ENCODE measurements at regions of chr11 and their contacts with region 1.

Region 1: DNA sequence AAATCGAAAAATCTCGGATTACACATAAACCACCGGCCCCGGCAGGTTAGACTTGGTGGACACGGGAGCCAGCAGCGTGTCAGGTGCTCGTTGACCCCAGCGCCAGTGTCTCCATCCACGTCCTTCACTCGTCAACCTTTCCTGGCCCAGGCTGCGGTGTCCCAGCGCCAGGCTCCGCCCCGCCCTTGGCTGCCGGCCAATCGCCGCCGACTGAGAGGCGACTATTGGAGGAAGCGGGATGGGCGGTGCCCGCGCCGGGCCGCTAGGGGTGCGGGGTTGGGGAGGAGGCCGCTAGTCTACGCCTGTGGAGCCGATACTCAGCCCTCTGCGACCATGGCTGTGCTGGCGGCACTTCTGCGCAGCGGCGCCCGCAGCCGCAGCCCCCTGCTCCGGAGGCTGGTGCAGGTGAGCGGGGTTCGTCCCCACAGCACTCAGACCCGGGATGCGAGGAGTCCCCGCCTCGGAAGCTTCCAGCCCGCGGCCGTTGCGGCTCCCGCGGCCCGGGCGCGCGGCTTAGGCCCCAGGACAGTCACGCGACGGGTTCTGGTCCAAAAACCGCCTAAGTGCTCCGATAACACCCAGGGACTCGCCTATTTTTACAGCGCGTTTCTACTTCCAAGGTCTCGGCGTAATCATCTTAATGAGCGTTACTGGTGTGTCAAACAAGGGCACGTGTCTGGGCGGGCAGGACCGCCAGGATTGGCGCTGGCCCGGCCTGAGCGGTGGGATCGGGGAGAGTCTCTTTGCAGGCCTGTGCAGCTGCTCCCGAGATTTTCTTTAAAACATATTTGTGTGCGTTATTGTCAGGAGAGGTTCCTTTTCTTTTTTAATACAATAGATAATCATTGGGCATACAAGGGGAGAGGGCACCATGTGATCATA is at the start of gene ACAT1:
- DNase-seq: peak; percentile 93 to 99 (median 96)

Region 2: DNA sequence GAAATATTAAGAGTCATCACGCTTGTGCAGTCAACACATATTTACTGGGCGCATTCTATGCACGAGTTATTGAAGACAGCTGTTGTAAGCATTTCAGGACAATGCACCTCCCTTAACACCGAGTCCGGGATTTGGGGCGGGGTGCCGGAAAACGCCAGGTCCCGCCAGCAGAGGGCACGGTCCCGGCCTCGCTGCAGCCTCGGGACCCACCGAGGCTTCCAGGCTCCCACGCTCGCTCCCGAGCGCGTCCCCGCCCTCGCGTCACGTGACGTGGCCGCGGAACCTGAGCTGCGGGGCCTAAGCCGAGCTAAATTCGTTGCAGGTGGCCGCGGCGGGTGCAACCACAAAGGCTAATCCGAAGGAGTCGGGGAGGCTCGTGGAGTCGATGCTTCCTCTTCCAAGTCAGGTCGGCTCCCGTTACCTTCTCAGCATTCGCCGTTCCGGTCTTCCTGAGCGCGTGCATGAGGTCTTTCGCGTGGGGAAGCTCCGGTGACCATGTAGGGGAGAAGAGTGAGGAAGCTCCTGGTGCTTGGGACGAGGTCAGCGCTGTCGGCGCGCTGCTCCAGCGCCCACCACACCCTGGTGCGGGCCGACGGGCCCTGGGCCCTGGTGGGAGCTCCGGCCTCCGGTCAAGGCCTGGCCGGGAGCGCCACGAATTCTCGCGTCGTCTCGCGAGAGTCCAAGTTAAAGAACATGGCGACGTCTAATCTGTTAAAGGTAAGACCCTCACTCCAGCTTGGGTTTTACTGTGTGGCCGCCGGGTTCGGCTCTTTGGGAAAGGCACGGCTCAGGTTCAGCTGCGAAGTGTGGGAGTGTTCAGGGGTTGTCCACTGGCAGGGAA is 112.6 kb before region 1 on chr11 and contains the start of gene CUL5:
- intact Hi-C with region 1: loop called (anchors 5 kb)
- DNase-seq: peak; percentile 85 to 98 (median 90)

Region 3: DNA sequence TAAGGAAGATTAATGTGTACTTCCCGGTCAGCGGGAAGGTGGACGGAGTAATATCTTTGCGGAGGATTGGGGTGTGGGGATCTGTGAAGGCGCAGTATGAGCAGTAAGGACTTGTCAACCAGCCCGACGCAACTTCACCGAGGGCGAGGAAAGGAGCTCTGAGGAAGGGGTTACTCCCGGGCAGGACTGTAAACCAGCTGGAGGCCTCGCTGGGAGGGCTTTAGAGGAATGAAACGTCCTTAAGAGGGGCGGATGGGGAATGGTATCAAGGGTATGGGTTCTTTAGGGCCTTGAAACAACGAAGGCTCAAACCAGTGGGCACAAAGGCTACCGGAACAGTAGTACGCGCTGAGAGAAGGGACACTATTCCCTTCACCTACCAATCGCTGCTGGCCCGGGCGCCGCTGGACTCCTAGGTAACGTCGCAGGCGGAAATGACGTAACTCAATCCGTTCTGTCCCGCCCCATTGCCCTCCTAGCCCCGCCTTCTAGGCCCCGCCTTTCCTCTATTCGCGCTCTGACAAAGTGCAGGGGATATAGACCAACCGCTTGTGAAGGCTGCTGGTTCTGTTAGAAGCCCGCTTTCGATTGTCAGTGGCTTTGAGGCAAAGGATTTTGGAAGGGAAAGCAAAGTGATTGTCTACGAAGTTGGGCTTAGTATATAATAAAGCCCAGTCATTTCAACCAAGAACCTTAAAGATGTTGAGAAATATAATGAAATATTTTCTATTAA is 345.7 kb after region 1 on chr11 and contains the start of gene C11orf65:
- intact Hi-C with region 1: loop called (anchors 10 kb)
- DNase-seq: peak; percentile 93 to 99 (median 97)

Region 4: DNA sequence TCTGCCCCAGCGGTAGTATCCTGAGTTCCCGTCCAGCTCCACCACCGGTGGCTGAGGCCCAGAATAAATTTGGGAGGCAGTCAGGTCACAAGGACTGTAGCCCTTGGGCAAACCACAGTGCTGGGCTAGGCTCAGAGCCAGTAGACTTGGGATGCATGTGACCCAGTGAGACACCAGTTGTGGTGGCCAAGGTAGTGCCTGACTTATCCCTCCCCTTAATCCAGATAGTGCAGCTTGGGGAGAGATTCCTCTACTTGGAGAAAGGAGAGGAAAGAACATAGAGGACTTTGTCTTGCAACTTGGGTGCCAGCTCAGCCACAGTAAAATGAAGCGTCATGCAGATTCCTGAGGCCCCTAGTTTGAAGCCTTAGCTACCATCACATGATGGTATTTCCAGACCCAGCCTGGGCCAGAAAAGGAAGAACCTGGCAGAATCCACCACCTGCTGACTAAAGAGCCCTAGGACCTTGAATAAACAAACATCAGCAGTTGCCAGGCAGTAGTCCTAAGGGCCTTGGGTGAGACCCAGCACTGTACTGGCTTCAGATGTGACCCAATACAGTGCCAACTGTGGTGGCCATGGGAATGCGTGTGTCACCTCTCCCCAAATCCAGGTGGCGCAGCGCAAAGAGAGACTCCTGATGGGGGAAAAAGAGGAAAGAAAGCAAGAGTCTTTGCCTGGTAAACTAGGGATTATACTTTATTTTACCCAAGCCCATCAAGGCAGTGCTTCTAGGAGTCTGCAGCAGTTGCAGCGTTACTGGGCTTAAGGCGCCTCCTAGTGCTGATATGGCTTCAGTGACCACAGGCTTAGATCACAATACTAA is 526.4 kb after region 1 on chr11:
- intact Hi-C with region 1: loop called (anchors 5 kb)
- DNase-seq: peak in 8 of 10 donors; percentile 20 to 90 (median 58)